A549 (cell line): ENCODE measurements at regions of chr15 and their contacts with region 1.

Region 1: GRCh38 chr15:101008158-101009139 is 89.3 kb downstream of the LRRK1 start:
- DNase-seq: peak; percentile 87 to 89
- ATAC-seq: peak; percentile 86 to 92
- H3K4me3 ChIP-seq: peak overlapping the region; percentile 55
- H3K27ac ChIP-seq: peak overlapping the region; percentile 81 to 82
- H3K4me1 ChIP-seq: peaks cover 13% of the 10 kb centered on the region; the same call in 2 of the 3 replicates
- CTCF ChIP-seq: peak; percentile 94
- EP300 ChIP-seq: no peak
- POLR2A ChIP-seq: peak; percentile 52
- RAD21 ChIP-seq: peak; percentile 58 to 59

Region 2: GRCh38 chr15:100349696-100350433 is 658.6 kb before region 1 on chr15:
- CTCF ChIA-PET with region 1: interaction called, 11 read pairs
- POLR2A ChIA-PET with region 1: no interaction called
- DNase-seq: peak; percentile 95 to 96
- ATAC-seq: peak; percentile 89 to 97
- H3K4me3 ChIP-seq: peak overlapping the region; percentile 60
- H3K27ac ChIP-seq: peak overlapping the region; percentile 90 to 97
- H3K4me1 ChIP-seq: peaks cover 9% of the 10 kb centered on the region
- CTCF ChIP-seq: peak; percentile 75
- EP300 ChIP-seq: no peak
- POLR2A ChIP-seq: no peak
- RAD21 ChIP-seq: peak; percentile 46 to 71

Region 3: GRCh38 chr15:100645671-100646070 is 362.8 kb before region 1 on chr15:
- CTCF ChIA-PET with region 1: interaction called, 14 read pairs
- POLR2A ChIA-PET with region 1: no interaction called
- DNase-seq: no peak
- ATAC-seq: no peak
- H3K4me3 ChIP-seq: no peak overlapping the region
- H3K27ac ChIP-seq: no peak overlapping the region
- H3K4me1 ChIP-seq: no peaks in the 10 kb centered on the region
- CTCF ChIP-seq: no peak
- EP300 ChIP-seq: no peak
- POLR2A ChIP-seq: no peak
- RAD21 ChIP-seq: no peak

Region 4: DNA sequence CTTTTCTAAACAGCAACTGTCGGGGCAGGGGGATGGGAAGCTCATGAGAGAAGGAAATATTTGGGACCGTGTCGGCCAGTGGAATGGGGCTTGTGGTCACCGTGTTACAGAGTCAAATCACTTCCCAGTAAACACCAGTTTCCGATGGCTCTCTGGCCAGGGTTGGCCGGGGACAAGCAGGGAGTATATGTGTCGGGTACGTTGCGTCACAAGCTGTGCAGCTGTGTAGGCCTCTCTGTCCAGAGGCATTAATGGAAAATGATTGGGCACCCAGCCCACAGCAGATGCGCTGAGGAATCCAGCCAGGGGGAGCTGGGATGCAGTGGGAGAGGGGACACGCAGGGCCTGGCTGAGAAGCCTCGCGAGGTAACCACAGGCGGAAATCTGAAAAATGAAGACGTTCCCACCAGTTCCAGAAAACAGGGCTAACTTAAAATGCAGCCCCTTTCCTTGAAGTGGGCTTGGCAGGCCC is 144.6 kb before region 1 on chr15:
- CTCF ChIA-PET with region 1: interaction called, 23 read pairs
- POLR2A ChIA-PET with region 1: interaction called, 9 read pairs
- DNase-seq: no peak
- ATAC-seq: no peak
- H3K4me3 ChIP-seq: no peak overlapping the region
- H3K27ac ChIP-seq: no peak overlapping the region
- H3K4me1 ChIP-seq: peaks cover 7% of the 10 kb centered on the region; the same call in 2 of the 3 replicates
- CTCF ChIP-seq: no peak
- EP300 ChIP-seq: no peak
- POLR2A ChIP-seq: no peak
- RAD21 ChIP-seq: no peak

Region 5: GRCh38 chr15:100918034-100918689 is 90.3 kb before region 1 on chr15:
- CTCF ChIA-PET with region 1: interaction called, 950 read pairs
- POLR2A ChIA-PET with region 1: interaction called, 52 read pairs
- DNase-seq: peak; percentile 92 to 97
- ATAC-seq: peak; percentile 81 to 94
- H3K4me3 ChIP-seq: peak overlapping the region; percentile 79
- H3K27ac ChIP-seq: peak overlapping the region; percentile 94 to 95
- H3K4me1 ChIP-seq: peaks cover 17% of the 10 kb centered on the region
- CTCF ChIP-seq: peak; percentile 97
- EP300 ChIP-seq: no peak
- POLR2A ChIP-seq: peak; percentile 55
- RAD21 ChIP-seq: peak; percentile 90 to 97

Region 6: DNA sequence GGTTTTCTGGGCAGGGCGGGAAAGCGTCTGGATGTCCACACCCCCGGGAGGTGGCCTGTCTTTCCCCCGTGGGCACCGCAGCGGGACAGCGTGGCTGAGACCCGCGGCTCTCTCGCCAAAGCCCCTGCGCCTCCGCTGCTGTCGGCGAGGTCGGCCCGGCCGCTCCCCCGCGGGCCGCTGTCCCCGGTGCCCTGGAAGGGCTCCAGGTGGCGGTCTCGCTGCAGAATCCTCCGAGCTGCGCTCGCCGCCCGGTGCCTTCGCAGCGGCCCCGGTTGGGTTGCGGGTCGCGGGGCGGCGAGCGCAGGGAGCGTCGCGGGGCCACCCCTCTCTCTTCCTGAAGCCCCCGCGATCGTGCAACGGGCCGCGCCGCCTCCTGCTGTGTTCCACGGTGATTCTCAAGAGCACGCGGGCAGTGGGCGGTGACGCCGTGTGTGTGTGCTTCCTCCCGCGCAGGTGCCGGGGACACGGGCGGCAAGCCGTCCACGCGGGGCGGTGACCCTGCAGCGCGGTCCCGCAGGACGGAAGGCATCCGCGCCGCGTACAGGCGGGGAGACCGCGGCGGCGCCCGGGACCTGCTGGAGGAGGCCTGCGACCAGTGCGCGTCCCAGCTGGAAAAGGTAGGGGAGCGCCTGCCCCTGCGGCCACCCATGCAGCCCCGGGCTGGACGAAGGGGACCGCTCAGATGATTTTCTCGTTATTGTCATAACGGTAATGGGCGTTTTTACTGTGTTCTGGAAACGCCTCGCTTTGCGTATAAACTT is 34.9 kb before region 1 on chr15:
- CTCF ChIA-PET with region 1: interaction called, 26 read pairs
- POLR2A ChIA-PET with region 1: no interaction called
- DNase-seq: no peak
- ATAC-seq: no peak
- H3K4me3 ChIP-seq: no peak overlapping the region
- H3K27ac ChIP-seq: no peak overlapping the region
- H3K4me1 ChIP-seq: no peaks in the 10 kb centered on the region
- CTCF ChIP-seq: no peak
- EP300 ChIP-seq: no peak
- POLR2A ChIP-seq: no peak
- RAD21 ChIP-seq: no peak

Region 7: GRCh38 chr15:101070502-101071273 is 62.2 kb after region 1 on chr15:
- CTCF ChIA-PET with region 1: interaction called, 10 read pairs
- POLR2A ChIA-PET with region 1: no interaction called
- DNase-seq: no peak
- ATAC-seq: peak in 1 of 2 experiments; percentile 10; a peak in 1 of 6 replicates
- H3K4me3 ChIP-seq: no peak overlapping the region
- H3K27ac ChIP-seq: peak overlapping the region in 1 of 2 experiments; percentile 50; a peak in 2 of 6 replicates
- H3K4me1 ChIP-seq: no peaks in the 10 kb centered on the region; the same call in 2 of the 3 replicates
- CTCF ChIP-seq: no peak
- EP300 ChIP-seq: no peak
- POLR2A ChIP-seq: no peak
- RAD21 ChIP-seq: no peak

Region 8: GRCh38 chr15:101126618-101127505 is 118.4 kb after region 1 on chr15:
- CTCF ChIA-PET with region 1: no interaction called
- POLR2A ChIA-PET with region 1: no interaction called
- DNase-seq: no peak
- ATAC-seq: peak in 1 of 2 experiments; percentile 39; a peak in 3 of 6 replicates
- H3K4me3 ChIP-seq: no peak overlapping the region
- H3K27ac ChIP-seq: no peak overlapping the region
- H3K4me1 ChIP-seq: no peaks in the 10 kb centered on the region
- CTCF ChIP-seq: no peak
- EP300 ChIP-seq: no peak
- POLR2A ChIP-seq: no peak
- RAD21 ChIP-seq: no peak

Region 9: DNA sequence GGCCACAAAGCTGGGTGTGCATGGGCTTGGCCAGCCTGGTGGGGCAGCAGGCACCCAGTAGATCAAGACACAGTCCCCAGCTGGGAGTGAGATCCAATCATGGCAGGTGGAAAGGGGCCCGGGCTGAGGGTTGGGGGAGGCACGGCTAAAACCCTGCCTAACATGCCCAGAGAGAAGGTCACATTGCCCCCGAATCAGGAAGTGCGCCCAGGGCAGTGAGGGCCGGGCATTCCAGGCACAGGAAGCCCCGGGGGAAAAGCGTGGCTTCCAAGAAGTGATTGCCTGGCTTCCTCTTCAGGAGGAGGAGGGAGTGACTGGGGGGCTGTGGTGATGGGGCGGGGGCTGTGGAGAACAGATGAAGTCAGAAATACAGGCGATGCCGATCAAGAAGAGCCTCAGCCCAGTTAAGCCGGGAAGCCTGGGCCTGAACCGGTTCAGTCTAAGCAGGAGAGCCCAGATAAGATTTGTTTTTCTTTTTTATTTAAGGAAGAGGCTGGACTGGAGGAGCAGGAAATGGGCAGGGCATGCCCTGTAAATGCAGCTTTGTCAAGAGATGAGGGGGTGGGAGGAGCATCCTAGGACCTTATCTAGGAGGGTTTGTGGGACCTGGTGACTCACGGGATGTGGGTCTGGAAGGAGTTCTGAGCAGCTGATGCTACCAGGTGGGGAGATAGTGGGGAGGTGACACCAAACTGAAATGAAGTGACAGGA is 159.5 kb after region 1 on chr15:
- CTCF ChIA-PET with region 1: no interaction called
- POLR2A ChIA-PET with region 1: no interaction called
- DNase-seq: peak in 1 of 2 experiments; percentile 12
- ATAC-seq: peak in 1 of 2 experiments; percentile 11; a peak in 1 of 6 replicates
- H3K4me3 ChIP-seq: no peak overlapping the region
- H3K27ac ChIP-seq: no peak overlapping the region
- H3K4me1 ChIP-seq: no peaks in the 10 kb centered on the region
- CTCF ChIP-seq: no peak
- EP300 ChIP-seq: no peak
- POLR2A ChIP-seq: no peak
- RAD21 ChIP-seq: no peak